ENCODE measurements at regions of chr3 and their contacts with region 1.

Region 1: DNA sequence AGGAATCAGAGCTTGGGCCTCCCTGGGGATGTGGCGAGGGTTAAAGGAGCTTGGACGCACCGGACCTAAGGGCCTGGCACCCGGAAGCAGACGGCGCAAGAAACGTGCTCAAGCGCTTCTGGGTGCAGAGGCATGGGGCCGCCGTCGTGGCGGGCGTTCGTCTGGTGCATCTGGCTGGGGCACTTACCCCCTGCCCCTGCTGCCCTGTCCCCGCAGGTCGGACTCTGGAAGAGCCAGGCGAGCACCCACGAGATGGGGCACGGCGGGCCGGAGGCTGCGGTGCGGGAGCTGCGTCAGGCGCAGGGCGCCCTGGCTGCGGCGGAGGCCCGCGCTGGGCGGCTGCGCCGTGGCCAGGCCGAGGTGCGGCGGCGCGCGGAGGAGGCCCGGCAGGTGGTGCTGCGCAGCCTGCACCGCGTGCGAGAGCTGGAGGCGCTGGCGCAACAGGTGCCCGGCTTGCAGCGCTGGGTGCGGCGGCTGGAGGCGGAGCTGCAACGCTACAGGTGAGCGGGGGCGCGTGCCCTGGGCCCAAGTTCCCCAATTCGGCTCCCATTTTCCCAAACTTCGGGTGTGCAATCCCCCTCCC is 2.6 kb downstream of the EFCC1 start:
- DNase-seq: no peak
- H3K4me3 ChIP-seq: peak overlapping the region in 3 of 4 experiments; percentile 4 to 50 (median 24); a peak in 6 of 8 replicates
- H3K27ac ChIP-seq: no peak overlapping the region
- H3K4me1 ChIP-seq: peaks cover 4 to 19% (median 13%) of the 10 kb centered on the region in 4 experiments
- H3K27me3 ChIP-seq: peaks cover 52 to 70% (median 58%) of the 10 kb centered on the region in 4 experiments
- CTCF ChIP-seq: peak in 2 of 3 experiments; percentile 25 to 38; a peak in 3 of 4 replicates
- EP300 ChIP-seq: no peak
- POLR2A ChIP-seq: no peak
- RAD21 ChIP-seq: no peak; a peak in 1 of 4 replicates

Region 2: DNA sequence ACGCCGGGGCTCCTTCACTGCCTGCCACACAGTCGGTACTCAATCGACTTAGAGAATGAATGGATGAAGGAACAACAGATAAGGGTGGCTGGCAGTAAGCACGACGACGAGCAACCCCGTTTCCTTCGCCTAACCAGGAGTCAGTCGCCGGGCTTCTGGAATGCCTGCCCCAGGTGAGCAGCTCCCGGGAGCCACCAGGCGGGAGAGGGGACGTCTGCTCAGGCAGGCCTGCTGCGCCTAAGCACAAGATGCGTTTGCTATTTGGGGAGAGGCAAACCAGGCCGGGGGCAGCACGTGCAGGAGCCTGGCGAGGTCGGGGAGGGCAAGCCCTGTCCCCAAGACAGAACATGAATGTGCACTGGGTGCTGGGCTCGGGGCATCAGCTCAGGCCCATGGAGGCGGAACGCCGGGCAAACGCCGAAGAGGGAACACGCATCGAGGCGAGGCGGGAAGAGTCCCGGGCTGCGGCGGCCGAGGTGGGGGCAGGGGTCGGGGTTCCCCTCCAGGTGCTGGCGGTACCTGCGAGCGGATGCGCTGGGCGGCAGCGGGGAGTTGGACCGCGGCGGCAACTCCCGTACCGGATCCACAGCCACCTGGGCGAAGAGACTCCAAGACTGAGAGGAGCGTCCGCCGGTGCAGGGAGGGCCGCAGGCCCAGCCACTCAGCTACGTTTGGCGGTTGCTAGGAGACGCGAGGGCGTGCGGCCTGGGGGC is 10.1 kb before region 1 on chr3 and contains the start of gene CFAP92:
- CTCF ChIA-PET with region 1: interaction called, 11 read pairs
- POLR2A ChIA-PET with region 1: interaction called, 5 read pairs
- DNase-seq: peak; percentile 41 to 96
- H3K4me3 ChIP-seq: peak within 1 kb of the TSS; percentile 42 to 62 (median 51)
- H3K27ac ChIP-seq: no peak within 1 kb of the TSS
- H3K4me1 ChIP-seq: peaks cover 2 to 14% (median 8%) of the 10 kb centered on the region in 4 experiments
- H3K27me3 ChIP-seq: peaks cover 0 to 19% (median 17%) of the 10 kb centered on the region in 4 experiments; a peak in 6 of 7 replicates
- CTCF ChIP-seq: peak in 1 of 3 experiments; percentile 11; a peak in 1 of 4 replicates
- EP300 ChIP-seq: no peak
- POLR2A ChIP-seq: no peak
- RAD21 ChIP-seq: no peak; a peak in 1 of 4 replicates
- total RNA-seq, gene CFAP92: 2.0 and 2.4 TPM in 2 replicates

Region 3: GRCh38 chr3:129016356-129016719 is 12.7 kb after region 1 on chr3:
- CTCF ChIA-PET with region 1: interaction called, 11 read pairs
- POLR2A ChIA-PET with region 1: interaction called, 13 read pairs
- DNase-seq: no peak
- H3K4me3 ChIP-seq: no peak overlapping the region
- H3K27ac ChIP-seq: no peak overlapping the region
- H3K4me1 ChIP-seq: peaks cover 0 to 7% (median 1%) of the 10 kb centered on the region in 4 experiments; a peak in 2 of 7 replicates
- H3K27me3 ChIP-seq: peaks cover 0 to 4% (median 0%) of the 10 kb centered on the region in 4 experiments; a peak in 1 of 7 replicates
- CTCF ChIP-seq: no peak
- EP300 ChIP-seq: no peak
- POLR2A ChIP-seq: no peak
- RAD21 ChIP-seq: no peak; a peak in 1 of 4 replicates

Region 4: DNA sequence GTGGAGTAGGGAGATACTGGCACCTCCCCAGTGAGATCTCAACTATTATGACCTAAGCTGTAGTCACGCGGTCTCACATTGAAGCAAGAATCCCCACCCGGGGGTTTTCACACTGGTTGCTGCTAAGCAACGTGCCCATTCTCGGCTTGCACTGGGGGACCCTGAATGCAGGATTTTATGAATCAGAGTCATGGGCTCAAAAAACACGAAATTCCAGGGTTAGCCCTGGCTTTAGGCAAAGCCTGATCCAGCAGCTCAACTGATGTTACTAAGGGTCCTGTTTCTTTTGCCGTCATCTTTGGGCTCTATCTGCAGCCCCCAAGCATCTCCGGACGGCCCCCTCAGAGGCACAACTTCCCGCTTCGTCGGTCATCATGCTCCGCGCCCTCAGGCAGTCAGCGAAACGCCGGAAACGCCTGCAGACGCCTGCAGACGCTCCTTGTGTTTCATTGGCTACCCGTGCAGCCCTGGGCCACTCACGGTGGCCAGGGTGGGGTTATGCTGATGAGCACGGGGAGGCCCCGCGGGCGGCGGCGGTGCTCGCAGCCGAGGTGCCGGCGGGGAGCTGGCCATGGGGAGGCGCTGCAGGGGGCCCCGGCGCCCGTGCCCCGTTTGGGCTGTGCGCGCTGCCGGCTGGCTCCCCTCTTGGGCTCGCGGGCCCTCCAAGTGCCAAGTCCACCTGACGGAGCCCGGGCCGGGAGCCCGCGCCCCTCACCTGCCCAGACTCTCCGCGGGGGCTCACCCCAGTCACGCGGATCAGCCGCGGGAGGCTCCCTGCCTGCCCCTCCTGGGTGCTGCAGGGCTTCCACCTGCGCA is 23.3 kb after region 1 on chr3:
- CTCF ChIA-PET with region 1: interaction called, 15 read pairs
- POLR2A ChIA-PET with region 1: interaction called, 3 read pairs
- DNase-seq: peak; percentile 73 to 81
- H3K4me3 ChIP-seq: peak overlapping the region in 3 of 4 experiments; percentile 11 to 52 (median 14); a peak in 6 of 8 replicates
- H3K27ac ChIP-seq: no peak overlapping the region
- H3K4me1 ChIP-seq: peaks cover 0 to 4% (median 0%) of the 10 kb centered on the region in 4 experiments; a peak in 3 of 7 replicates
- H3K27me3 ChIP-seq: peaks cover 5 to 23% (median 19%) of the 10 kb centered on the region in 4 experiments
- CTCF ChIP-seq: peak; percentile 27 to 42 (median 32)
- EP300 ChIP-seq: no peak
- POLR2A ChIP-seq: no peak
- RAD21 ChIP-seq: peak in 1 of 2 experiments; percentile 28; a peak in 2 of 4 replicates

Measured in H1 (cell line).